Endothelial cell of umbilical vein (primary cell): ENCODE measurements at regions of chr6 and their contacts with region 1.

Region 1: GRCh38 chr6:154432533-154433476 is 76.2 kb upstream of the IPCEF1 start:
- DNase-seq: peak; percentile 94
- H3K4me3 ChIP-seq: no peak overlapping the region
- H3K27ac ChIP-seq: peak overlapping the region; percentile 39
- H3K4me1 ChIP-seq: peaks cover 21% of the 10 kb centered on the region
- H3K27me3 ChIP-seq: no peaks in the 10 kb centered on the region
- CTCF ChIP-seq: no peak
- POLR2A ChIP-seq: peak; percentile 83

Region 2: DNA sequence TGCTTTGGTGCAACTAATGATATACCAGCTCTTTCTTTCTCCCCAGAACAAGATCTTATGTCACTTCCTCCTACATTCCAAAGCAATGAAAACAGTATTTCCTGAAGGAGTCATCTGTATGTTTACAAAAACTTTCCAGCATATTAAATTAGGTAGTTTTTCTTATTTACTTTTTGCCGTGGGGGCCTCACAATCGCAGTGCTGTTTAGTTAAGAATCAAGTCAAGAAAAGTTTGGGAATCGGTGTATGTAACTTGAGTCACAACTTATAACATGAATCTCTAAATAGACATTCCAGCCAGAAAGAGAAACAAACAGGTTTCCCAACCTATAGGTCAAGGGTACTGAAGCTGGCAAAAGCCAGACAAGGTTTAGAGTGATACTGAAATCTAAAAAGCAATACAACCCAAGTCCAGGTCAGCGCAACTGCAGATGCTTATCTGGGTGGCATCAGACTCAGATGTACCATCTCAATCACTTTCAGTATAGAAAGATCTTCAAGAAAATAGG is 139.9 kb before region 1 on chr6:
- CTCF ChIA-PET with region 1: no interaction called
- POLR2A ChIA-PET with region 1: no interaction called
- dilution Hi-C with region 1: no loop called
- intact Hi-C with region 1: loop called (anchors 1 kb)
- DNase-seq: peak; percentile 85
- H3K4me3 ChIP-seq: peak overlapping the region in 1 of 3 experiments; percentile 16
- H3K27ac ChIP-seq: peak overlapping the region; percentile 85
- H3K4me1 ChIP-seq: peaks cover 22% of the 10 kb centered on the region
- H3K27me3 ChIP-seq: no peaks in the 10 kb centered on the region
- CTCF ChIP-seq: no peak
- POLR2A ChIP-seq: no peak

Region 3: DNA sequence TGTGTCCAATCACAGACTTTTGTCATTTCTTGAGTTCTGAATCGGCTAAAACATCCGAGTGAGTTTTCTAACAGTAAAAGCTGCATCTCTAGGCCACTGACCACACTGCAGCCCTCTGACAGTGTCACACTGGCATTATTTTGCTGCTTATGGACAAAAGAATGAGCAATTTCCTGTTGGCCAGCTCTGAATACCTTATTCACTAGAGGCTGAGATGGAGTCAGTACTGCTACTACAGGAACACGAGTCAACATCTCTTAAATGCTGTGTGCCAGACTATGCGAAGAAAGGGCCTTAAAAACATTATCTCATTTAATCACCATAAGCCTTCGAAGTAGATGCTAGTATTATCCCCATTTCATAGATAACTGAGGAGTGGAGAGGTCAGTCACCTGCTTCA is 33.7 kb before region 1 on chr6:
- CTCF ChIA-PET with region 1: no interaction called
- POLR2A ChIA-PET with region 1: no interaction called
- dilution Hi-C with region 1: no loop called
- intact Hi-C with region 1: loop called (anchors 1 kb)
- DNase-seq: peak; percentile 89
- H3K4me3 ChIP-seq: no peak overlapping the region
- H3K27ac ChIP-seq: peak overlapping the region; percentile 93
- H3K4me1 ChIP-seq: peaks cover 16% of the 10 kb centered on the region
- H3K27me3 ChIP-seq: no peaks in the 10 kb centered on the region
- CTCF ChIP-seq: no peak
- POLR2A ChIP-seq: no peak

Region 4: GRCh38 chr6:154448448-154449096 is 15.8 kb after region 1 on chr6:
- CTCF ChIA-PET with region 1: interaction called, 15 read pairs
- POLR2A ChIA-PET with region 1: no interaction called
- dilution Hi-C with region 1: no loop called
- intact Hi-C with region 1: loop called (anchors 1 kb)
- DNase-seq: peak; percentile 77
- H3K4me3 ChIP-seq: no peak overlapping the region
- H3K27ac ChIP-seq: no peak overlapping the region
- H3K4me1 ChIP-seq: peaks cover 19% of the 10 kb centered on the region
- H3K27me3 ChIP-seq: no peaks in the 10 kb centered on the region
- CTCF ChIP-seq: peak in 1 of 2 donors; percentile 29
- POLR2A ChIP-seq: no peak

Region 5: GRCh38 chr6:154615483-154616025 is 182.7 kb after region 1 on chr6:
- CTCF ChIA-PET with region 1: no interaction called
- POLR2A ChIA-PET with region 1: no interaction called
- dilution Hi-C with region 1: no loop called
- intact Hi-C with region 1: loop called (anchors 1 kb)
- DNase-seq: peak; percentile 27
- H3K4me3 ChIP-seq: no peak overlapping the region
- H3K27ac ChIP-seq: no peak overlapping the region
- H3K4me1 ChIP-seq: peaks cover 22% of the 10 kb centered on the region
- H3K27me3 ChIP-seq: no peaks in the 10 kb centered on the region
- CTCF ChIP-seq: no peak
- POLR2A ChIP-seq: no peak

Region 6: DNA sequence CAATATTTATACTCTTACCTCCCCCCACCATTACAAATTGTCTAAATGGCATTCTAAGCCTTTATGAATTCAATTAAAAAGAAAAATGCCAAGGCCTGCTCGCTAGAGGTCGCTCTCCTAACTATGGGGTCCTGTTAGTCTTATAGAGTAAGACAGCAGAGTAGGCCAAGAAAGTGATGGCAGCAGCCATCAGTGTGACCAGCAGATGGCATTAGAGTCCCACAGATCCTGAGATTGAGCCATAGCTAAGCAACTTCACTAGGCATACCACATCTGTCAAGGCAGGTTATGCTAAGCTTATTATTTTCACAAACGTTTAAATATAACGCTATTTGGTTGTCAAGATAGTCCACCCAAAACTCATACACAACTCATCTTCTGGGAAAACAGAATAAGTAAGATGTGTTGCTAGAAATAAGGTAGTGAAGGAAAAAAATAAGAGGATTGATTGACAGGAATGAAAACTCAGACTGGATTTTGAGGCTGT is 242.8 kb after region 1 on chr6:
- CTCF ChIA-PET with region 1: no interaction called
- POLR2A ChIA-PET with region 1: no interaction called
- dilution Hi-C with region 1: no loop called
- intact Hi-C with region 1: no loop called
- DNase-seq: peak; percentile 99
- H3K4me3 ChIP-seq: no peak overlapping the region
- H3K27ac ChIP-seq: no peak overlapping the region
- H3K4me1 ChIP-seq: no peaks in the 10 kb centered on the region
- H3K27me3 ChIP-seq: no peaks in the 10 kb centered on the region
- CTCF ChIP-seq: peak; percentile 94 to 99
- POLR2A ChIP-seq: peak; percentile 21